B cell (primary cell): ENCODE measurements at regions of chr2 and their contacts with region 1.

Region 1: DNA sequence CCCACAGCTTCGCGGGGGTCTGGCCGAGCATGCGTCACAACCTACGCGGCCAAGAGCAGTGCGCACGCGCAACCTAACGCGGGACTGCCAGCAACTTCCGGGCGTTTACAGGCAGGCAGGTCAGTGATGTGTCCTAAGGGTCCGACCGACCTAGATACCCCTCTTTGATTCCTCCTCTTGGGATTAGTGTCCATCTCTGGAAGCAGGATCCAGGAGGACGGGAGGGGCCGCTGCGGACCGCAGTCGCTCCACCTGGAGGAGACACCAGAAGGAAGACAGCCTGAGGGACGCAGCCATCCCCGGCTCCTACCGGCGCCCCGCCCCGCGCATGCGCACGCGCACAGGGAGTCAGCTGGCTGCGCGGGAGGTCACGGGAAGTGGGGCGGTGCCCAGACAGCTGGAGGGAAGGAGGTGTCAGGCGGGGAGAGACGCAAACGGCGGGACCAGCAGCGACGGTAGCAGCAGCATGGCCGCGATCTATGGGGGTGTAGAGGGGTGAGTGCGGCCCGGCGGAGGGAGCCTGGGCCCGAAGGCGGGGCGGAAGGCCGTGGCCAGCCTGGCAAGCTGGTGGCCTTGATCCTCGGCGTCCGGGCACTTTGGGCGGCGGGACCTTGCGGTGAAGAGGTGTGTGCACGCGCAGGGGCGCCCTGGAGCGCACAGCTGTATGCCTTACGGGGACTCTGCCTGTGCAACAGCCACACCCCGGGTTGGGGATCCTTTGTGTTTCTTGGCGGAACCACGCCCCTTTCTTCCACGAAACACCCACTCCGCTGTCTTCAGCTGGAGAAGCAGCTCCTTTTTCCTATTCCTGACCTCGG is at the start of gene NAGK:
- DNase-seq: peak; percentile 99
- ATAC-seq: peak; percentile 74
- H3K4me3 ChIP-seq: peak within 1 kb of the TSS; percentile 69 to 99 (median 91)
- H3K4me3 Mint-ChIP-seq: peak within 1 kb of the TSS; percentile 99
- H3K27ac ChIP-seq: peak within 1 kb of the TSS; percentile 98 to 99
- H3K27ac Mint-ChIP-seq: peak within 1 kb of the TSS; percentile 100
- H3K4me1 ChIP-seq: peaks cover 79 to 84% of the 10 kb centered on the region in 2 donors
- H3K4me1 Mint-ChIP-seq: peaks cover 87% of the 10 kb centered on the region
- H3K27me3 ChIP-seq: no peaks in the 10 kb centered on the region
- H3K27me3 Mint-ChIP-seq: no peaks in the 10 kb centered on the region
- CTCF ChIP-seq: no peak
- total RNA-seq, gene NAGK: 210 and 221 TPM in 2 replicates

Region 2: GRCh38 chr2:70248181-70248847 is 820.1 kb before region 1 on chr2 and contains the start of gene TIA1:
- CTCF ChIA-PET with region 1: no interaction called
- POLR2A ChIA-PET with region 1: no interaction called
- intact Hi-C with region 1: loop called (anchors 5 kb)
- DNase-seq: peak; percentile 99
- ATAC-seq: peak; percentile 96
- H3K4me3 ChIP-seq: peak within 1 kb of the TSS; percentile 70 to 98 (median 95)
- H3K4me3 Mint-ChIP-seq: peak within 1 kb of the TSS; percentile 98
- H3K27ac ChIP-seq: peak within 1 kb of the TSS; percentile 86 to 94
- H3K27ac Mint-ChIP-seq: peak within 1 kb of the TSS; percentile 98
- H3K4me1 ChIP-seq: peaks cover 24 to 29% of the 10 kb centered on the region in 2 donors
- H3K4me1 Mint-ChIP-seq: peaks cover 35% of the 10 kb centered on the region
- H3K27me3 ChIP-seq: no peaks in the 10 kb centered on the region
- H3K27me3 Mint-ChIP-seq: no peaks in the 10 kb centered on the region
- CTCF ChIP-seq: no peak
- total RNA-seq, gene TIA1: 214 and 243 TPM in 2 replicates

Region 3: DNA sequence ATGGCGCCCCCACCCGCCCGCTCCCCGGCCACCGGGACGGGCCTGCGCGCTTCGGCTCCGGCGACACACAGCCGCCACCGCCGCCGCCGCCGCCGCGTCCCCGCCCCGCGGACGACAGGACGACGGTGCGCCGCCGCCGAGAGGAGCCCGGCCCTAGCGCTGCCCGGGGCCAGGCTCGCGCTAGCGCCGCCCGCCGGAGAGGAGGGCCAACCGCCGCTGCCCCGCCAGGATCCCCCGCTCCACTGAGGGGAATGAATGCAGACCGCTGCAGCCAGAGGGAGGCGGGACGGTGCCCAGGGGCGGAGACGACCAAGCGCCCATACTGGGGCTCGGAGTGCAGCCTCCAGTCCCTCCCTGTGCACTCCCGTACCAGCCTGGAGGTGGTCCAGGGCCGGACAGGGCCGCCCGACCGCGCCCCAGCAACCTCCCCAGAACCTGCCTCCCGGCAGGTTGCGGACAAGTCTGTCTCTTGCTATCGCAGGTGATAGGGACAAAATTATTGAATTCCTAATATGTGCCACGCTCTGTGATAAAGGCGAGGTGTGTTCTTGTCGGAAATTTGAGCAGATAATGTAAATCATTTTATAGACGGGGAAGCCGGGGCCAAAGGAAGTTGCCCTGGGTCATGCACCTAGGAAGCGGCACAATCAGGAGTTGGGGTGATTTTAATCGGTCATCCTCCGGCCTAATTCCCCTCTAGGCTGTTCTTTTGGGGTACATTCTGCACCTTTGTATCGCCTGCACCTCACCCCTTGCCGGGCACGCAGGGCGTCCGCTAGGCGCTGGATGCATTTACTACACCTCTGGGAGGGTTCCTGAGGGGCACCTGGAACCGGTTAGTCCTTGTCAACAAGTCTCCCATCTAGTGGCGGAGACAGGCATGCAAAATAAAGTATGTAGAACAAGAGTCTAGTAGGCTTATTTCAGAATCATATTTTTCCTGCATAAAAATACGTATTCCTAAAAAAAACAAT is 73.4 kb before region 1 on chr2 and contains the start of gene TEX261:
- CTCF ChIA-PET with region 1: interaction called, 4 read pairs
- POLR2A ChIA-PET with region 1: no interaction called
- intact Hi-C with region 1: loop called (anchors 1 kb)
- DNase-seq: peak; percentile 92
- ATAC-seq: peak; percentile 97
- H3K4me3 ChIP-seq: peak within 1 kb of the TSS; percentile 81 to 93 (median 89)
- H3K4me3 Mint-ChIP-seq: peak within 1 kb of the TSS; percentile 96
- H3K27ac ChIP-seq: peak within 1 kb of the TSS; percentile 32 to 77
- H3K27ac Mint-ChIP-seq: peak within 1 kb of the TSS; percentile 92
- H3K4me1 ChIP-seq: peaks cover 21 to 23% of the 10 kb centered on the region in 2 donors
- H3K4me1 Mint-ChIP-seq: peaks cover 34% of the 10 kb centered on the region
- H3K27me3 ChIP-seq: no peaks in the 10 kb centered on the region
- H3K27me3 Mint-ChIP-seq: no peaks in the 10 kb centered on the region
- CTCF ChIP-seq: peak; percentile 59
- total RNA-seq, gene TEX261: 54.0 and 56.4 TPM in 2 replicates

Region 4: DNA sequence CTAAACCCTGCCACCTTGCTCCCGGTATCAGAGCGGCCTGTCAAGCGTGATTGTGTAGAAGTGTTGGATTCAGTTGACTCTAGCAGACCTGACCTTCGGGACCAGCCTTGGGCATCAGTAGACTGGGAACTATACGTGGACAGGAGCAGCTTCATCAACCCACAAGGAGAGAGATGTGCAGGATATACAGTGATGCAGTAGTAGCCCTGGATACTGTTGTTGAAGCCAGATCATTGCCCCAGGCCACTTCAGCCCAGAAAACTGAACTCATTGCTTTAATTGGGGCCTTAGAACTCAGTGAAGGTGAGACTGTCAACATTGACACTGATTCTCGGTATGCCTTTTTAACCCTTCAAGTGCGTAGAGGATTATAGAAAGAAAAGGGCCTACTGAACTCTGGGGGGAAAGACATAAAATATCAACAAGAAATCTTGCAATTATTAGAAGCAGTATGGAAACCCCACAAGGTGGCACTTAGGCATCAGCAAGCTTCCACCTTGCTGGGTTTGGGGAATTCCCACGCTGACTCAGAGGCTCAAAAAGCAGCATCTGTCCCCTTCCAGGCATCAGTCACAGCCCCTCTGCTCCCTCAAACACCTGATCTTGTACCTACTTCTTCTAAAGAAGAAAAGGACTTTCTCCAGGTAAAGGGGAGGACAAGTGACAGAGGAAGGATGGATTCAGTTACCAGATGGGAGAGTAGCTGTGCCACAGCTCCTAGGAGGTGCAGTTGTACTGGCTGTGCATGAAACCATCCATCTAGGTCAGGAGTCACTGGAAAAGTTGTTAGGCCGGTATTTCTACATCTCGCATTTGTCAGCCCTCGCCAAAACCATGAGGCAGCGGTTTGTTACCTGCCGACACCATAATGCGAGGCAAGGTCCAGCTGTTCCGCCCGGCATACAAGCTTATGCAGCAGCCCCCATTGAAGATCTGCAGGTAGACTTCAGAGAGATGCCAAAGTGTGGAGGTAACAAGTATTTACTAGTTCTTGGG is 18.8 kb before region 1 on chr2:
- CTCF ChIA-PET with region 1: interaction called, 6 read pairs
- POLR2A ChIA-PET with region 1: interaction called, 3 read pairs
- intact Hi-C with region 1: loop called (anchors 2 kb)
- DNase-seq: peak; percentile 67
- ATAC-seq: peak; percentile 47
- H3K4me3 ChIP-seq: no peak overlapping the region
- H3K4me3 Mint-ChIP-seq: no peak overlapping the region
- H3K27ac ChIP-seq: no peak overlapping the region
- H3K27ac Mint-ChIP-seq: no peak overlapping the region
- H3K4me1 ChIP-seq: peaks cover 0 to 3% of the 10 kb centered on the region in 2 donors
- H3K4me1 Mint-ChIP-seq: peaks cover 3% of the 10 kb centered on the region
- H3K27me3 ChIP-seq: peaks cover 0 to 3% (median 0%) of the 10 kb centered on the region in 4 experiments
- H3K27me3 Mint-ChIP-seq: peaks cover 6% of the 10 kb centered on the region
- CTCF ChIP-seq: peak; percentile 38

Region 5: GRCh38 chr2:71130113-71130904 is 61.9 kb after region 1 on chr2 and contains the starts of genes MCEE and MPHOSPH10:
- CTCF ChIA-PET with region 1: interaction called, 11 read pairs
- POLR2A ChIA-PET with region 1: interaction called, 52 read pairs
- intact Hi-C with region 1: loop called (anchors 1 kb)
- DNase-seq: peak; percentile 92
- ATAC-seq: peak; percentile 93
- H3K4me3 ChIP-seq: peak within 1 kb of the TSS; percentile 82 to 97 (median 90)
- H3K4me3 Mint-ChIP-seq: no peak within 1 kb of the TSS
- H3K27ac ChIP-seq: peak within 1 kb of the TSS; percentile 73 to 81
- H3K27ac Mint-ChIP-seq: no peak within 1 kb of the TSS
- H3K4me1 ChIP-seq: peaks cover 20 to 25% of the 10 kb centered on the region in 2 donors
- H3K4me1 Mint-ChIP-seq: peaks cover 19% of the 10 kb centered on the region
- H3K27me3 ChIP-seq: no peaks in the 10 kb centered on the region
- H3K27me3 Mint-ChIP-seq: no peaks in the 10 kb centered on the region
- CTCF ChIP-seq: no peak
- total RNA-seq, gene MCEE: 17.6 and 21.7 TPM in 2 replicates
- total RNA-seq, gene MPHOSPH10: 45.8 and 51.8 TPM in 2 replicates

Region 6: GRCh38 chr2:71276311-71277146 is 208.1 kb after region 1 on chr2:
- CTCF ChIA-PET with region 1: no interaction called
- POLR2A ChIA-PET with region 1: no interaction called
- intact Hi-C with region 1: loop called (anchors 2 kb)
- DNase-seq: peak; percentile 90
- ATAC-seq: peak; percentile 99
- H3K4me3 ChIP-seq: peak overlapping the region; percentile 23 to 77 (median 58)
- H3K4me3 Mint-ChIP-seq: peak overlapping the region; percentile 87
- H3K27ac ChIP-seq: no peak overlapping the region
- H3K27ac Mint-ChIP-seq: peak overlapping the region; percentile 24
- H3K4me1 ChIP-seq: peaks cover 18 to 19% of the 10 kb centered on the region in 2 donors
- H3K4me1 Mint-ChIP-seq: peaks cover 22% of the 10 kb centered on the region
- H3K27me3 ChIP-seq: peaks cover 0 to 19% (median 9%) of the 10 kb centered on the region in 4 experiments
- H3K27me3 Mint-ChIP-seq: peaks cover 54% of the 10 kb centered on the region
- CTCF ChIP-seq: no peak